ENCODE measurements at regions of chr1 and their contacts with region 1.

Region 1: DNA sequence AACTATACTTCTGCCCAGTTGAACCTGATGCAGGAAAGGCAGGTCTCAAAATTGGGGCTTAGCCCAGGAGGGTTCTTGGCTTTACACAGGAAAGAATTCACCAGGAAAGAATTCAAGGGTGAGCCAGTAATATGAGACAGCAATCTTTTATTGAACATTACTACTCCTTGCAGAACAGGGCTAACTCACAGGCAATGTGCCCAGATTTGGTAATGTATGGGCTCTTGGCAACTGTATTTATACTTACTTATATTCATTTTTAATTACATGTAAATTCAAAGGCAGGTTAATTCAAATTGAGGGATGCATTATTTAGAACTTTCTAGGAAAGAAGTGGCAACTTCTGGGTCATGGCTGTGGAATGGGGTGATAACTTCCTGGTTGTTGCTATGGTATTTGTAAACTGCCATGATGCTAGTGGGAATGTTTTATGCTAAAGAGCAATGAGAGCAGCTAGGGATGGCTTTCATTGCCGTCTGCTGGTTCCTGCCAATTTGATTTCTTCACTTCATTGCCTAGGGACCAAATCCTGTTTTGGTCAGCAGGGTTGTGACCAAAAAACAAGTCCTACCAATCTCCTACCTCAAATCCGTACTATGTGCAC is 107.5 kb downstream of the CHRM3 start:
- DNase-seq: peak; percentile 86
- ATAC-seq: peak; percentile 96
- H3K4me3 ChIP-seq: no peak overlapping the region
- H3K27ac ChIP-seq: peak overlapping the region; percentile 34
- H3K4me1 ChIP-seq: peaks cover 16% of the 10 kb centered on the region
- H3K27me3 ChIP-seq: no peaks in the 10 kb centered on the region
- CTCF ChIP-seq: no peak

Region 2: DNA sequence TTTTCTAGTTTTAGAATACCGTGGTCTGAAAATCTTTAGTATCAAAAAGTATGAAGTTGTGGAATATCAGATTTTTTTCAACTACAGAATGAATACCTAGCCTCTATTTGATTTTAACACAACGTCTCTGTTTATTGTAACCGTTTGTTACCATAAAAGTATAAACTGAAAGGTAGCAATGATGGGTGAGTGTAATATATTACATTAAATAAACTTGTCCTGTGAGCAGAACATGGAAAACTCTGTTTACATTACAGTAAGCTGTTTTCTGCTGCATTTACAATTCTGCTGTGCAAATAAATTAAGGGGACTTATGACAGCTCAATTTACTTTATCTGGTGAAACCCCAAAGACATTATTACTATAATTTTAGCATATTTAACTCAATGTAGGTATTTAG is 45.0 kb before region 1 on chr1:
- CTCF ChIA-PET with region 1: no interaction called
- POLR2A ChIA-PET with region 1: no interaction called
- intact Hi-C with region 1: loop called (anchors 2 kb)
- DNase-seq: no peak
- ATAC-seq: peak; percentile 12; the same call in 1 of the 2 replicates
- H3K4me3 ChIP-seq: no peak overlapping the region
- H3K27ac ChIP-seq: no peak overlapping the region
- H3K4me1 ChIP-seq: peaks cover 28% of the 10 kb centered on the region
- H3K27me3 ChIP-seq: no peaks in the 10 kb centered on the region
- CTCF ChIP-seq: no peak

Region 3: GRCh38 chr1:239898062-239898730 is 404.3 kb after region 1 on chr1:
- CTCF ChIA-PET with region 1: no interaction called
- POLR2A ChIA-PET with region 1: no interaction called
- intact Hi-C with region 1: no loop called
- DNase-seq: peak; percentile 94
- ATAC-seq: peak; percentile 84
- H3K4me3 ChIP-seq: no peak overlapping the region
- H3K27ac ChIP-seq: no peak overlapping the region
- H3K4me1 ChIP-seq: peaks cover 15% of the 10 kb centered on the region
- H3K27me3 ChIP-seq: no peaks in the 10 kb centered on the region
- CTCF ChIP-seq: peak; percentile 99

Region 4: DNA sequence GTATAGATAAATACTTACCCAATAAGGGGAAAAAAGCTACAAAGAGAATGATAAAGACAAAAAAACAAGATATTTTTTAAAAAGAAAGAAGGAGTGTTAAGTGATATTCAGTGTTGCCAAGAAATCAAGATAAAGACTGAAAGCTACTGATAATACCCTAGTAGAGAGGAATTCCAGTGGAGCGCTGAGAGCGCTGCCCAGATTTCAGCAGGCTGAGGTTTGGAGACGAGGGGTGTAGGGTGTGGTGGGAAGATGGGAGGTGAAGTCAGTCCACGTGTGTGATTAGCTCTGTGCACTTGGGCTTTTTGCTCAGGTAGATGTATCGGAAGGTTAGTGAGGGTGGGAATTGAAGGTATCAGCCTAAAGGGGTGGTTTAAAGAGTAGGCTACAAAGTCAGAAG is 645.6 kb after region 1 on chr1:
- CTCF ChIA-PET with region 1: no interaction called
- POLR2A ChIA-PET with region 1: no interaction called
- intact Hi-C with region 1: no loop called
- DNase-seq: no peak
- ATAC-seq: no peak
- H3K4me3 ChIP-seq: no peak overlapping the region
- H3K27ac ChIP-seq: no peak overlapping the region
- H3K4me1 ChIP-seq: no peaks in the 10 kb centered on the region
- H3K27me3 ChIP-seq: no peaks in the 10 kb centered on the region
- CTCF ChIP-seq: no peak